H1 (cell line): ENCODE measurements at regions of chr1 and their contacts with region 1.

Region 1: GRCh38 chr1:111813521-111814304 is 58.0 kb downstream of the DDX20 start:
- DNase-seq: no peak
- H3K4me3 ChIP-seq: no peak overlapping the region
- H3K27ac ChIP-seq: no peak overlapping the region
- H3K4me1 ChIP-seq: no peaks in the 10 kb centered on the region
- H3K27me3 ChIP-seq: no peaks in the 10 kb centered on the region
- CTCF ChIP-seq: peak; percentile 10 to 36 (median 11); a peak in 3 of 4 replicates
- EP300 ChIP-seq: no peak
- POLR2A ChIP-seq: no peak
- RAD21 ChIP-seq: peak in 1 of 2 experiments; percentile 27; a peak in 1 of 4 replicates

Region 2: GRCh38 chr1:111639602-111640198 is 174.0 kb before region 1 on chr1:
- CTCF ChIA-PET with region 1: no interaction called
- POLR2A ChIA-PET with region 1: no interaction called
- DNase-seq: no peak
- H3K4me3 ChIP-seq: no peak overlapping the region
- H3K27ac ChIP-seq: no peak overlapping the region
- H3K4me1 ChIP-seq: peaks cover 0 to 6% (median 2%) of the 10 kb centered on the region in 4 experiments; a peak in 2 of 7 replicates
- H3K27me3 ChIP-seq: no peaks in the 10 kb centered on the region
- CTCF ChIP-seq: no peak
- EP300 ChIP-seq: no peak
- POLR2A ChIP-seq: no peak
- RAD21 ChIP-seq: no peak

Region 3: GRCh38 chr1:111801071-111801841 is 12.5 kb before region 1 on chr1:
- CTCF ChIA-PET with region 1: interaction called, 10 read pairs
- POLR2A ChIA-PET with region 1: no interaction called
- DNase-seq: no peak
- H3K4me3 ChIP-seq: no peak overlapping the region
- H3K27ac ChIP-seq: no peak overlapping the region
- H3K4me1 ChIP-seq: no peaks in the 10 kb centered on the region
- H3K27me3 ChIP-seq: no peaks in the 10 kb centered on the region
- CTCF ChIP-seq: peak; percentile 26 to 56 (median 50)
- EP300 ChIP-seq: no peak
- POLR2A ChIP-seq: no peak
- RAD21 ChIP-seq: peak; percentile 52 to 61

Region 4: GRCh38 chr1:111827946-111828538 is 14.3 kb after region 1 on chr1:
- CTCF ChIA-PET with region 1: no interaction called
- POLR2A ChIA-PET with region 1: no interaction called
- DNase-seq: no peak
- H3K4me3 ChIP-seq: no peak overlapping the region
- H3K27ac ChIP-seq: no peak overlapping the region
- H3K4me1 ChIP-seq: peaks cover 0 to 4% (median 0%) of the 10 kb centered on the region in 4 experiments; a peak in 1 of 7 replicates
- H3K27me3 ChIP-seq: no peaks in the 10 kb centered on the region
- CTCF ChIP-seq: no peak
- EP300 ChIP-seq: no peak
- POLR2A ChIP-seq: no peak
- RAD21 ChIP-seq: no peak

Region 5: DNA sequence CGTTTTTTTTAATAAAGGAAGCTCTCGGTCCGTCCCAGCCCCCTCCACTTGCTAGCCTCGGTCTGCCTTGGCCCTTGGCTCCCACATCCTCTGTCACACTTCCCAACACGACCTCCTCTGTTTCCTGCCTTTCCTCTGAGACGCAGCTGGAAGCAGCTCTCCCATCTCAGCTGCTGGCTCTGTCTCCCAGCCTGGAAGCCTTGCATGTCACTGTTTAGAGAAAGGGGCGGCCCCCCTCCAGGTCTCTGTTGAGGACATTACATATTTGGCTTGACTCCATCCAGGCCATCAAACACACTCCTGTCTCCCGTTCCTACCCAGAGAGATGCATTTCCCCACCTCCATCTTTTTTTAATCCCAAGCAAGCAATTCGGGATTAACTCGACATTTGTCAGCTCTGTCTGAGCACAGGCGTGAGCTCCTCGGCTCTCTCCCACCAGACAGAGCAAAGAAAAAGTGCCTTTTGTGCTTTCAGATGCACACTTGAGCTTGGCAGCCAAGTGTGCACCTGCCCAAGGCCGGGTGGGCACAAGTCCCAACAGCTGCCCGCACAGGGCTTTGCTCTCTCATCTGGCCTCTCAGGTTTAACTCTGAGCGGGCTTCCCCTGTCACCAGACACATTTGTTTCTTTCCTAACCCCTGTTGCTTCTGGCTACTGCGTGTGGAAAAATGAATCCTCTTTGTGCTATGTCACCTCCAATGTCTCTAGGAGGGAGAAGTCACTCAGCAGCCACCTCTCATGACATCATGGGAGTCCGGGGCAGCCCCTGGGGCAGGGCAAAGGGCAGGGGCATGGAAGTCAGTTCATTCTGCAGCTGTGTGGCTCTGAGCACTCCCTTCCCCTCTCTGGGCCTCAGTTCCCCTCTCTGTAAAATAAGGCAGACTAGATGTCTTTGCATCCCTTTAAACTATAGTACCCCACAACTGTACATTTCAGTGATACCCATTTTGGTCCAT is 67.4 kb after region 1 on chr1:
- CTCF ChIA-PET with region 1: no interaction called
- POLR2A ChIA-PET with region 1: no interaction called
- DNase-seq: no peak
- H3K4me3 ChIP-seq: no peak overlapping the region
- H3K27ac ChIP-seq: no peak overlapping the region
- H3K4me1 ChIP-seq: no peaks in the 10 kb centered on the region; a peak in 1 of 7 replicates
- H3K27me3 ChIP-seq: no peaks in the 10 kb centered on the region
- CTCF ChIP-seq: no peak
- EP300 ChIP-seq: no peak
- POLR2A ChIP-seq: no peak
- RAD21 ChIP-seq: no peak